Activated CD8-positive, alpha-beta T cell treated with anti-CD3 and anti-CD28 coated beads for 36 hours (primary cell): ENCODE measurements at regions of chr14 and their contacts with region 1.

Region 1: DNA sequence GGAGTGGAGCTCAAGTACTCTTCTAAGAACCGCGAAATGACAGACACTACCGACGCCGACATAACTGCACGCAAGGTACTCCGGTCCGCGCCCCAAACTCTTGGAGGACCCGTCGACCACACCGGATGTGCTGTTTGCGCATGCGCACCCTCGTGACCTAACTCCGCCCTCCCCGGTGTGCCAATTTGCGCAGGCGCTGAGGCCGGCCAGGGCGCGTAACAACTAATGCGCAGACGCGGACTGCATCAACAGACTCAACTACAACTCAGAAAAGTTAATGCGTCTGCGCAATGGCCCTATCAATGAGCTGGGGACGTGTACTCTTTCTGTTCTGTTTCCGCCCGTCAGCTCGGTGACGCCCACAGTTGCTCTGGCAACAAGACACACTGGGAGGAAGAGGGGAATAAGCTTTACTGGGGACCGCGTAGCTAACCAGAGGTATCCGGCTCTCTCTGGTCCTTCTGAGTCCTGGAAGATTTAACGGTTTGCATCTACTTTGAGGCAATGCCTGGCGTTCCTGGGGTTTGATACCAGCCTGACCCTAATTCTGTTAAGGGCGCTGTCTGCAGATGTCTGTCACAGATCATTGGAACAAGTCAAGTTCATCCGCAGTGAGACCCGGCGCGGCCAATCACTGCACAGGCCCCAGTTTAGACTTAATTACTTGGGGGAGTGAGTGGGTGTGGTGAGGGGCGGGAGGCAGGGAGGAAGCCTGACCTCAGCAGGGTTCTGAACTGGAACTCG is at the start of gene DAD1:
- DNase-seq: peak; percentile 99
- ATAC-seq: peak; percentile 91
- H3K4me3 Mint-ChIP-seq: peak within 1 kb of the TSS; percentile 83
- H3K27ac Mint-ChIP-seq: peak within 1 kb of the TSS; percentile 98
- H3K4me1 Mint-ChIP-seq: peaks cover 57% of the 10 kb centered on the region
- H3K27me3 Mint-ChIP-seq: peaks cover 1% of the 10 kb centered on the region
- CTCF ChIP-seq: peak; percentile 39
- total RNA-seq, gene DAD1: 194 to 196 TPM

Region 2: DNA sequence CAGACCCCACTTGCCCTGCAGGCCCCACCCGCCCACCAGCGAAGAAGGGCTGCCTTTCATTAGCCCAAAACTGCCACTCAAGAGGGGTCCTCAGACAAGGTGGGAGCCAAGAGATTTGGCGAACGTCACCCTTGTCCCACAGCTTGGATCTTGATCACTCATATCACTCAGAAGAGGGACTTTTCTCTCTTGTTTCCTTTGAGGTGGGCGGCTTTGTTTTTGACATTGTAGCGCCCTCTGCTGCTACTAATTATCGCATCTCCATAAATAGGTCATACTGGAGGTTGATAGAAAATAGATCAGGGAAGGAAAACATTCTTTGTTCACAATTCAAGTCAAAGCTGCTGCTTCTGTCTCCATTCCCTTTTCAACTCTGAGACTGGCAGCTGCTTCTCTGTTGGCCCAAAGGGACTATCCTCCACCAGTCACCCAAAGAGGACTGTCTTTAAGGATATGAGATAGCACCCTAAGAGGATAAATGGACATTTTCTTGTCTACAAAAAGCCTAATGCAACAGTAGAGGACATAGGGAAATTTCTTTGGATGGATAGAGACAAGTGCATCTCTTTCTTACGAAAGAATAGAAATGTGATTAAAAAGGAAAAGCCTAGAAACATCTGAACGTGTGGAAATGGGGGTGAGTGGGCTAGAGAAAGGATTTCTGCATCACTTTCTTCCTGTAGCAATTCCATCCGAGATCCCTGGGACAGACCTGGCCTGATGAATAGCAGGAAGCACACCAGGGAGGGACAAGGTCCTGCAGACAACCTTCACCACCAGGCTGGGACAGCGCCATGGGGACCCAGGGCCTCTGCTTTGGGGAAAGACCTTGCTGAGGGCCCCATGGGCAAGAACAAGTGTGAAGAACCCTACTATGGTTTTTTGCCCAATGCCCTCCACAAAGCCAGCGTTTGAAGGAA is 116.1 kb before region 1 on chr14:
- CTCF ChIA-PET with region 1: no interaction called
- POLR2A ChIA-PET with region 1: no interaction called
- intact Hi-C with region 1: no loop called
- DNase-seq: no peak
- ATAC-seq: no peak
- H3K4me3 Mint-ChIP-seq: no peak overlapping the region
- H3K27ac Mint-ChIP-seq: no peak overlapping the region
- H3K4me1 Mint-ChIP-seq: no peaks in the 10 kb centered on the region
- H3K27me3 Mint-ChIP-seq: no peaks in the 10 kb centered on the region
- CTCF ChIP-seq: no peak

Region 3: GRCh38 chr14:22715186-22715812 is 126.0 kb after region 1 on chr14:
- CTCF ChIA-PET with region 1: no interaction called
- POLR2A ChIA-PET with region 1: no interaction called
- intact Hi-C with region 1: loop called (anchors 10 kb)
- DNase-seq: peak; percentile 25
- ATAC-seq: peak; percentile 18
- H3K4me3 Mint-ChIP-seq: no peak overlapping the region
- H3K27ac Mint-ChIP-seq: no peak overlapping the region
- H3K4me1 Mint-ChIP-seq: peaks cover 22% of the 10 kb centered on the region
- H3K27me3 Mint-ChIP-seq: peaks cover 10% of the 10 kb centered on the region
- CTCF ChIP-seq: peak; percentile 17